HCT116 (cell line): ENCODE measurements at regions of chr2 and their contacts with region 1.

Region 1: GRCh38 chr2:118046634-118047210 is 32.9 kb upstream of the CCDC93 start:
- DNase-seq: peak; percentile 26
- ATAC-seq: peak; percentile 69
- H3K4me3 ChIP-seq: no peak overlapping the region
- H3K27ac ChIP-seq: no peak overlapping the region
- H3K4me1 ChIP-seq: peaks cover 0 to 24% of the 10 kb centered on the region in 2 experiments; a peak in 2 of 4 replicates
- H3K27me3 ChIP-seq: no peaks in the 10 kb centered on the region
- CTCF ChIP-seq: peak; percentile 56 to 76 (median 73)
- POLR2A ChIP-seq: no peak
- RAD21 ChIP-seq: peak; percentile 88

Region 2: GRCh38 chr2:118032169-118033013 is 14.3 kb before region 1 on chr2:
- CTCF ChIA-PET with region 1: interaction called, 29 read pairs
- POLR2A ChIA-PET with region 1: no interaction called
- RAD21 ChIA-PET with region 1: no interaction called
- intact Hi-C with region 1: no loop called
- DNase-seq: no peak
- ATAC-seq: peak; percentile 94
- H3K4me3 ChIP-seq: no peak overlapping the region
- H3K27ac ChIP-seq: no peak overlapping the region
- H3K4me1 ChIP-seq: no peaks in the 10 kb centered on the region
- H3K27me3 ChIP-seq: no peaks in the 10 kb centered on the region
- CTCF ChIP-seq: peak; percentile 49 to 78 (median 65); a peak in 5 of 6 replicates
- POLR2A ChIP-seq: no peak
- RAD21 ChIP-seq: peak; percentile 57

Region 3: GRCh38 chr2:118202707-118203303 is 156.1 kb after region 1 on chr2:
- CTCF ChIA-PET with region 1: interaction called, 11 read pairs
- POLR2A ChIA-PET with region 1: no interaction called
- RAD21 ChIA-PET with region 1: interaction called in 1 of 2 experiments, 3 read pairs
- intact Hi-C with region 1: loop called (anchors 1 kb)
- DNase-seq: no peak
- ATAC-seq: peak; percentile 96
- H3K4me3 ChIP-seq: no peak overlapping the region
- H3K27ac ChIP-seq: no peak overlapping the region
- H3K4me1 ChIP-seq: peaks cover 0 to 3% of the 10 kb centered on the region in 2 experiments; a peak in 1 of 4 replicates
- H3K27me3 ChIP-seq: no peaks in the 10 kb centered on the region
- CTCF ChIP-seq: peak; percentile 47 to 89 (median 88); a peak in 5 of 6 replicates
- POLR2A ChIP-seq: no peak
- RAD21 ChIP-seq: peak; percentile 63

Region 4: DNA sequence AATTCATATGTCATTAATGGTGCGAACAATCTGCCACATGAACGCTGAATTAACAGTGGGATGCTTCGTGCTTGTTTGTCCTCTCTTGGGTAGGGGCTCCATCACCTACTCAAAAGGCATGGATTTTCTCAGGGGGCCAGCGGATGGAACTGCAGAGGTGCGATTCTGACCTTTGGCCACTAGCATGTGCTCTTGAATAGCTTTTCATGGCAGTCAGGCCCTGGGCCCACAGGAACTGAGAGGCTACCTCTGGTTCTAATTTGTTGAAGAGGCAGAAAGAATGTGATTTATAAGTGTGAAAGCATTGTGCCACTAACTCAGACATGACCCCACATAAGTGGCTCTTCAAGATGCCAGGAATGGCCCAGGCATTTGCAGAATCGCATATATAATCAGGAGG is 324.8 kb after region 1 on chr2:
- CTCF ChIA-PET with region 1: no interaction called
- POLR2A ChIA-PET with region 1: no interaction called
- RAD21 ChIA-PET with region 1: no interaction called
- intact Hi-C with region 1: loop called (anchors 5 kb)
- DNase-seq: peak; percentile 19
- ATAC-seq: peak; percentile 89
- H3K4me3 ChIP-seq: no peak overlapping the region
- H3K27ac ChIP-seq: no peak overlapping the region
- H3K4me1 ChIP-seq: no peaks in the 10 kb centered on the region
- H3K27me3 ChIP-seq: no peaks in the 10 kb centered on the region
- CTCF ChIP-seq: peak; percentile 63 to 78 (median 69); a peak in 5 of 6 replicates
- POLR2A ChIP-seq: no peak
- RAD21 ChIP-seq: peak; percentile 80

Region 5: GRCh38 chr2:118855451-118856279 is 808.9 kb after region 1 on chr2:
- CTCF ChIA-PET with region 1: interaction called, 42 read pairs
- POLR2A ChIA-PET with region 1: no interaction called
- RAD21 ChIA-PET with region 1: interaction called, 4 to 9 read pairs
- intact Hi-C with region 1: loop called (anchors 1 kb)
- DNase-seq: peak; percentile 53
- ATAC-seq: peak; percentile 96
- H3K4me3 ChIP-seq: peak overlapping the region; percentile 40 to 47
- H3K27ac ChIP-seq: no peak overlapping the region
- H3K4me1 ChIP-seq: peaks cover 0 to 4% of the 10 kb centered on the region in 2 experiments; a peak in 1 of 4 replicates
- H3K27me3 ChIP-seq: no peaks in the 10 kb centered on the region
- CTCF ChIP-seq: peak; percentile 75 to 96 (median 75)
- POLR2A ChIP-seq: no peak
- RAD21 ChIP-seq: peak; percentile 91